Lower leg skin (tissue), 4 donors: ENCODE measurements at regions of chr12 and their contacts with region 1.

Region 1: GRCh38 chr12:121697098-121697698 is 15.4 kb upstream of the TMEM120B start:
- DNase-seq: no peak
- H3K4me3 ChIP-seq: no peak overlapping the region
- CTCF ChIP-seq: peak in 1 of 3 donors; percentile 40
- POLR2A ChIP-seq: no peak

Region 2: GRCh38 chr12:121579190-121579791 is 117.9 kb before region 1 on chr12:
- intact Hi-C with region 1: no loop called
- DNase-seq: peak in 1 of 2 donors; percentile 88
- H3K4me3 ChIP-seq: peak overlapping the region; percentile 41
- CTCF ChIP-seq: no peak
- POLR2A ChIP-seq: no peak

Region 3: DNA sequence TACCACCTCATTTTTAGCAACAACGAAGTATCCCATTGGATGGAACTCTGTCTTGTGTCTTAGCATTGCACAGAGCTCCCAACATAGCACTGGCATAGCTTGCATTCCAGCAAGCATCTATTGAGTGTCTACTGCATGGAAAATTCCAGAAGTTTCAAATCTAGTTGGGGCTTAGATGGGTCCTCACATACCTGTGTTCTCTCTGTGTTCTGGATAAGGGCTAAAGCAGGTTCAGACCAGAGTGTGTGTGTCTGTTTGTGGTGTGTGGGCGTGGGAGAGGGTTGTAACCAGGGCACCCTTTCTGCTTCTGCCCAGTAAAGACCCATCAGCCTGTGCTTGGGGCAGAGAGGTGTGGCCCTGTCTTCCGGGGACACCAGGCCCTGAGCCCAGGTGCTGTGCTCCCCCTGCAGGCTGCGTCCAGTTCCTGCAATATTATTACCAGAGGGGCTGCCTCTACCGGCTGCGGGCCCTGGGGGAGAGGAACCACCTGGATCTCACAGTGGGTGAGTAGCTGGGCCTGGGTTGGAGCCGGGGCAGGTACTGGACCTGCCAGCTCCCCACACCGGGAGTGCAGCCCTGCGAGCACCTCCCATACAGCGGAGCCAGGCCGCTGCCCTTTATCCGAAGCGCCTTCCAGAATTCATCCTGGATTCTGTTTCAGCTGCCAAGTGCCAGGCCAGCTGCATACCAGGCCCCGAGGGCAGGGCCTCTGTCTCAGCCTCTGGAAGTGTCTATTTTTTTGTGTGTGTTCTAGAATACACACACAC is 76.0 kb after region 1 on chr12:
- intact Hi-C with region 1: loop called (anchors 5 kb)
- DNase-seq: no peak
- H3K4me3 ChIP-seq: no peak overlapping the region
- CTCF ChIP-seq: peak in 1 of 3 donors; percentile 26
- POLR2A ChIP-seq: no peak

Region 4: GRCh38 chr12:121793838-121794533 is 96.8 kb after region 1 on chr12:
- intact Hi-C with region 1: loop called (anchors 5 kb)
- DNase-seq: peak; percentile 84 to 97
- H3K4me3 ChIP-seq: peak overlapping the region; percentile 18
- CTCF ChIP-seq: peak in 1 of 3 donors; percentile 98
- POLR2A ChIP-seq: no peak